Calu3 (cell line): ENCODE measurements at regions of chr1 and their contacts with region 1.

Region 1: GRCh38 chr1:15526490-15527339 is at the start of gene DNAJC16:
- DNase-seq: peak; percentile 96
- H3K4me3 Mint-ChIP-seq: peak within 1 kb of the TSS; percentile 87
- H3K27ac Mint-ChIP-seq: peak within 1 kb of the TSS; percentile 98
- H3K4me1 Mint-ChIP-seq: peaks cover 11% of the 10 kb centered on the region
- H3K27me3 Mint-ChIP-seq: no peaks in the 10 kb centered on the region
- CTCF ChIP-seq: no peak
- total RNA-seq, gene DNAJC16: 18.2 and 20.6 TPM in 2 replicates

Region 2: DNA sequence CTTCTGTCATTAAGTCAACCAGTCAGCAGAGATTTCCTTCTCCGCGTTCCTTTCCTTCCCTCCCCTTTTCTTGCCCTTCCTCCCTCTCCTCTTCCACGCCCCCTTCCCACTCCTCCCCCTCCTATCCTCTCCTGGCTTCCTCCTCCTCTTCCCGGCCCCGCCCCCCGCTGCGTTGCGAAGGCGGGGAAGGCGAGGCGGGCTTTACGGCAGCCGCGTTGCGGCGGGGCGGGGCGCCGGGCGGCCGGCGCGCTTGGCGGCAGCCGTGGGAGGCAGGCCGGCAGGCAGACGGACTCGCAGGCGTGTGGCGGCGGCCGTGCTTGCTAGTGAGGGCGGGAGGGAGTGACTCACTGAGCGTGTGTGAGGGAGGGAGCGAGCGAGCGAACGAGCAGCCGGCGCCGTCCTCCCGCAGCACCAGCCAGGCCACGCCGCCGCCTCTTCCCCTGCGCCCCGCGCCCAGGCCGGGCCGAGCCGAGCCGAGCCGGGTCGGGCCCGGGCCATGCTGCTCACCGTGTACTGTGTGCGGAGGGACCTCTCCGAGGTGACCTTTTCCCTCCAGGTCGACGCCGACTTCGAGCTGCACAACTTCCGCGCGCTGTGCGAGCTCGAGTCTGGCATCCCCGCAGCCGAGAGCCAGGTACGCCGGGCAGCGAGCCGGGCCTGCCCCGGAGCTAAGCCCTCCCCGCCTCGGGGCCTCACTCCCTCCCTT is 90.6 kb after region 1 on chr1 and contains the start of gene DDI2:
- CTCF ChIA-PET with region 1: interaction called, 4 read pairs
- intact Hi-C with region 1: loop called (anchors 5 kb)
- DNase-seq: peak; percentile 96
- H3K4me3 Mint-ChIP-seq: peak within 1 kb of the TSS; percentile 63
- H3K27ac Mint-ChIP-seq: peak within 1 kb of the TSS; percentile 77
- H3K4me1 Mint-ChIP-seq: peaks cover 13% of the 10 kb centered on the region
- H3K27me3 Mint-ChIP-seq: no peaks in the 10 kb centered on the region
- CTCF ChIP-seq: no peak
- total RNA-seq, gene DDI2: 27.0 and 30.1 TPM in 2 replicates

Region 3: GRCh38 chr1:16032388-16033103 is 505.8 kb after region 1 on chr1:
- CTCF ChIA-PET with region 1: no interaction called
- intact Hi-C with region 1: no loop called
- DNase-seq: peak; percentile 85
- H3K4me3 Mint-ChIP-seq: no peak overlapping the region
- H3K27ac Mint-ChIP-seq: no peak overlapping the region
- H3K4me1 Mint-ChIP-seq: no peaks in the 10 kb centered on the region
- H3K27me3 Mint-ChIP-seq: peaks cover 43% of the 10 kb centered on the region
- CTCF ChIP-seq: peak; percentile 88